ENCODE measurements at regions of chr2 and their contacts with region 1.

Region 1: GRCh38 chr2:98465456-98466226 is 21.0 kb downstream of the INPP4A start:
- DNase-seq: peak; percentile 61 to 94 (median 90)
- ATAC-seq: peak; percentile 69
- H3K4me3 ChIP-seq: peak overlapping the region; percentile 39 to 45
- H3K4me3 Mint-ChIP-seq: peak overlapping the region; percentile 86
- H3K27ac ChIP-seq: peak overlapping the region; percentile 59 to 86
- H3K27ac Mint-ChIP-seq: peak overlapping the region; percentile 97
- H3K4me1 ChIP-seq: peaks cover 88% of the 10 kb centered on the region
- H3K4me1 Mint-ChIP-seq: peaks cover 88% of the 10 kb centered on the region
- H3K27me3 ChIP-seq: no peaks in the 10 kb centered on the region
- H3K27me3 Mint-ChIP-seq: no peaks in the 10 kb centered on the region
- CTCF ChIP-seq: no peak

Region 2: GRCh38 chr2:97718051-97718882 is 747.4 kb before region 1 on chr2:
- CTCF ChIA-PET with region 1: no interaction called
- POLR2A ChIA-PET with region 1: no interaction called
- intact Hi-C with region 1: loop called in 1 of 2 experiments (anchors 10 kb)
- DNase-seq: peak; percentile 58 to 90 (median 80)
- ATAC-seq: peak; percentile 76
- H3K4me3 ChIP-seq: peak overlapping the region; percentile 68 to 91
- H3K4me3 Mint-ChIP-seq: peak overlapping the region; percentile 96
- H3K27ac ChIP-seq: peak overlapping the region; percentile 80 to 88
- H3K27ac Mint-ChIP-seq: peak overlapping the region; percentile 97
- H3K4me1 ChIP-seq: peaks cover 80% of the 10 kb centered on the region
- H3K4me1 Mint-ChIP-seq: peaks cover 85% of the 10 kb centered on the region
- H3K27me3 ChIP-seq: no peaks in the 10 kb centered on the region
- H3K27me3 Mint-ChIP-seq: no peaks in the 10 kb centered on the region
- CTCF ChIP-seq: no peak

Region 3: GRCh38 chr2:98455494-98455976 is 10.1 kb before region 1 on chr2:
- CTCF ChIA-PET with region 1: interaction called, 18 read pairs
- POLR2A ChIA-PET with region 1: interaction called, 61 read pairs
- intact Hi-C with region 1: loop called in 1 of 2 experiments (anchors 1 kb)
- DNase-seq: peak in 4 of 9 experiments; percentile 39 to 84 (median 60)
- ATAC-seq: peak; percentile 56
- H3K4me3 ChIP-seq: no peak overlapping the region
- H3K4me3 Mint-ChIP-seq: peak overlapping the region; percentile 56
- H3K27ac ChIP-seq: peak overlapping the region; percentile 63 to 76
- H3K27ac Mint-ChIP-seq: peak overlapping the region; percentile 92
- H3K4me1 ChIP-seq: peaks cover 98% of the 10 kb centered on the region
- H3K4me1 Mint-ChIP-seq: peaks cover 94% of the 10 kb centered on the region
- H3K27me3 ChIP-seq: no peaks in the 10 kb centered on the region
- H3K27me3 Mint-ChIP-seq: no peaks in the 10 kb centered on the region
- CTCF ChIP-seq: no peak

Region 4: DNA sequence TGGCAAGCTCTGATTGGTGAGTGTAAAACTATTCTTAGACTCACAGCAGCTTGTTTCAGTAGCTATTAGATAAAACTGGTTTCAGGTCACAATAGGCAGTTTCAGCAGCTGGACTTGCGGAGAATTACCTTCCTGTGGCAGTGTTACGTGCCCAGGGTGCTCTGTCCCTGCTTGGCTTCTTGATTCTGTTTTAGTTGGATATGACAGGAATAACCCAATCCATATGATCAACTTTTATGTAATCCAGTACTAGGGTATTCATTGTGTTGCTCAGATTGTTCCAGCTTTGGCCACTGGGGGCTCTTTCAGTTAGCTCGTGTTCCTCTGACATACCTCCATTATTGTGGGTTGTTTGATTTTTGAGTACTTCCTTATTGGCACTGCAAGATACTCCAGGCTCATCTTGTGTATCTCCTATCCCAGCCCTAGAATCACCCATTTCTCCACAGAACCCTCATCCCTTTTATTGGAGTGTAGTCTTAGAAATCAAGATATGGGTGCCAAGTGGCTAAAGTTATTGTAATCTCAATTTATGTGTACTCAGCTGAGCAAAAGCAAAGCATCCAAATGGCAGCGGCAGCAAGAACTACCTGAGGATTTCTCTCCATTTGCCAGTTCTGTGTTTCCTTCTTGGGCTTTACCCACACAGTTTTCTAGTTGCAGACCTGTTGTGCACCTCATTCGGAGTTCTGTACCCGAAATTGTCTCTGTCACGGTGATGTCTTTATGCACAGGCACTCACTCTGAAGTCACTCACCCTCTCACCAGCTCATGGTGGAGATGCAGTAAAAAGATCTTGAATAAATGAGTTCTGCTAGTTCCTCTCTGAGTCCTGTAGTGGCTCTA is 22.4 kb after region 1 on chr2:
- CTCF ChIA-PET with region 1: interaction called, 24 read pairs
- POLR2A ChIA-PET with region 1: interaction called, 15 read pairs
- intact Hi-C with region 1: loop called in 1 of 2 experiments (anchors 2 kb)
- DNase-seq: peak in 7 of 9 experiments; percentile 31 to 78 (median 64)
- ATAC-seq: peak; percentile 86
- H3K4me3 ChIP-seq: no peak overlapping the region
- H3K4me3 Mint-ChIP-seq: peak overlapping the region; percentile 47
- H3K27ac ChIP-seq: no peak overlapping the region
- H3K27ac Mint-ChIP-seq: peak overlapping the region; percentile 84
- H3K4me1 ChIP-seq: peaks cover 95% of the 10 kb centered on the region
- H3K4me1 Mint-ChIP-seq: peaks cover 97% of the 10 kb centered on the region
- H3K27me3 ChIP-seq: no peaks in the 10 kb centered on the region
- H3K27me3 Mint-ChIP-seq: no peaks in the 10 kb centered on the region
- CTCF ChIP-seq: peak; percentile 71

Region 5: GRCh38 chr2:98654699-98655495 is 189.3 kb after region 1 on chr2:
- CTCF ChIA-PET with region 1: no interaction called
- POLR2A ChIA-PET with region 1: no interaction called
- intact Hi-C with region 1: loop called in 1 of 2 experiments (anchors 10 kb)
- DNase-seq: peak in 5 of 9 experiments; percentile 43 to 90 (median 75)
- ATAC-seq: peak; percentile 51
- H3K4me3 ChIP-seq: no peak overlapping the region
- H3K4me3 Mint-ChIP-seq: peak overlapping the region; percentile 69
- H3K27ac ChIP-seq: peak overlapping the region; percentile 77 to 80
- H3K27ac Mint-ChIP-seq: peak overlapping the region; percentile 99
- H3K4me1 ChIP-seq: peaks cover 92% of the 10 kb centered on the region
- H3K4me1 Mint-ChIP-seq: peaks cover 84% of the 10 kb centered on the region
- H3K27me3 ChIP-seq: no peaks in the 10 kb centered on the region
- H3K27me3 Mint-ChIP-seq: no peaks in the 10 kb centered on the region
- CTCF ChIP-seq: no peak